Activated T-helper 1 cell treated with anti-CD3 and anti-CD28 coated beads, Interleukin-12 subunit alpha, Interleukin-12 subunit beta, Interleukin-2, Interleukin-4 antibody, amounts not matched to agents 30 ng/mL and 10 ng/mL and 1 ng/mL, durations not matched to agents 14 hours and 24 hours and 36 hours (primary cell): ENCODE measurements at regions of chr3 and their contacts with region 1.

Region 1: DNA sequence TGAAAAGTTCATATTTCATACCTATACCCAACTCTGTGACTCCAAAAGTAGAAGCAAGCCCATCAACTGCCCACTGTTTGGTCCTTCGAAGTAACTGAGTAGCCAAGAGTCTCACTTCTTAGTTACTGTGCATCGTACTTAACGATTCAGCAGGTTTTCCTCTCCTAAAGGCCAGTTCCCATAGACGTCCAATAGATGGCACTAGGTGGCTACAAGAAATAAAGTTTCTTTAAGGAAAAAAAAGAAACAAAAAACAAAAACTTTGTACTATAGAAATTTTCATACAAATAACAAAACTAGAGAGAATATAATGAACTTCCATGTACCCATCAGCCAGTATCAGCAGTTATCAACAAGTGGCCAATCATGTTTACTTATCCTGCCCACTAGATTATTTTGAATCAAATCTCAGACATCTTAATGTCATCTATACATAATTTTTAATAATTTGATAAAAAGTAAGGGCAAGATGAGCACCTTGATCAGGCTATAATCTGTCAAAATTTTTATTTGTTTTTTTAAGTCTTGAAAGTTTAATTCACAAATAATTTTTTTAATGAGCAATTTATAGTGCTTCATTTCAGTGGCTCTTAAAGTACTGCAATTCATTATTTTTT is 63.8 kb upstream of the ACP3 start:
- DNase-seq: no peak
- H3K4me3 Mint-ChIP-seq: no peak overlapping the region
- H3K27ac Mint-ChIP-seq: no peak overlapping the region
- H3K4me1 Mint-ChIP-seq: no peaks in the 10 kb centered on the region
- H3K27me3 Mint-ChIP-seq: peaks cover 5% of the 10 kb centered on the region

Region 2: GRCh38 chr3:132210476-132211346 is 42.7 kb before region 1 on chr3:
- intact Hi-C with region 1: no loop called
- DNase-seq: no peak
- H3K4me3 Mint-ChIP-seq: no peak overlapping the region
- H3K27ac Mint-ChIP-seq: no peak overlapping the region
- H3K4me1 Mint-ChIP-seq: no peaks in the 10 kb centered on the region
- H3K27me3 Mint-ChIP-seq: no peaks in the 10 kb centered on the region

Region 3: DNA sequence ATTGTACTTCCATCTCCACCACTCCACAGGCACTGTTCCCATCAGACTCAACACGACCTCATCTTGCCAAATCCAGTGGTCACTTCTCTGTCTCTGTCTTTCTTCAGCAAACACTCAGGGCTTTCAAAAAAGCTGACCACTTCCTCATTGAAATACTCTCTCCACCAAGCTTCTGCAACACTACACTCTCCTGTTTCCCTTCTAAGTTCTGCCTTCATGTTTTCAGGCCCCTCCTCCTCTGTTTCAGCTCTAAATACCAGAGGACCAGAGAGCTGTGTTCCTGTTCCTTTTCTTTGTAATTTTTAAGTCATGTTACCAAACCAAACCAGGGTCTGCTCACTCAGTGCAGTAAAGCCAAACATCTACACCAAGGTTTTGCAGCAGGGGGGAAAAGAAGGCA is 30.1 kb after region 1 on chr3:
- intact Hi-C with region 1: no loop called
- DNase-seq: no peak
- H3K4me3 Mint-ChIP-seq: no peak overlapping the region
- H3K27ac Mint-ChIP-seq: no peak overlapping the region
- H3K4me1 Mint-ChIP-seq: no peaks in the 10 kb centered on the region
- H3K27me3 Mint-ChIP-seq: peaks cover 5% of the 10 kb centered on the region

Region 4: DNA sequence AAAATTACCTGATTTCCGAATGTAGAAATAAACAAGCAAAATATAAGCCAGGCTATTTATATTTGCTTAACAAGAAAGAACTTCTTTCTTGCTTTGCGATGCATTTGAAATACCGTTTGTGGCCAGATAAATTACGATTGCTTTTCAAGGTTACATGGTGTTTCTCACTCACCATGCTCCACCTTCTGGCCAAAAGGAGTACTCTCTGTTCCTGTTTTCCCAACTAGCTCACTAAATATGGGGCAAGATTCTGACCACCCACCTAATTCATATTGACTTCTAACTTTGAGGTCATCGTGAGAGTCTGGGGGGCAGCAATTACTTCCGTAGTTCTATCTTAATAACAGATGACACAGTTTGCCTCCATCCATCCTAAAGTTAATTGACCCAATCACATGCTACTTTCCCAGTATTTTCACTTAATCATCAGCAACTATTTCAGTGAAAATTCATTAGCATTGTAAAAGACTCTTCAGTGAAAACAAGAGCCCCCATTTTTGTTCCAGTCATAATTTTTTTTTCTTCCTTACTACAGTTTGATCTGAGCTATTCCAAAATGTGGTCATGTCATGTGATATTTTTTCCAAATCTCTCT is 89.7 kb after region 1 on chr3:
- intact Hi-C with region 1: loop called (anchors 1 kb)
- DNase-seq: no peak
- H3K4me3 Mint-ChIP-seq: no peak overlapping the region
- H3K27ac Mint-ChIP-seq: no peak overlapping the region
- H3K4me1 Mint-ChIP-seq: no peaks in the 10 kb centered on the region
- H3K27me3 Mint-ChIP-seq: peaks cover 23% of the 10 kb centered on the region

Region 5: DNA sequence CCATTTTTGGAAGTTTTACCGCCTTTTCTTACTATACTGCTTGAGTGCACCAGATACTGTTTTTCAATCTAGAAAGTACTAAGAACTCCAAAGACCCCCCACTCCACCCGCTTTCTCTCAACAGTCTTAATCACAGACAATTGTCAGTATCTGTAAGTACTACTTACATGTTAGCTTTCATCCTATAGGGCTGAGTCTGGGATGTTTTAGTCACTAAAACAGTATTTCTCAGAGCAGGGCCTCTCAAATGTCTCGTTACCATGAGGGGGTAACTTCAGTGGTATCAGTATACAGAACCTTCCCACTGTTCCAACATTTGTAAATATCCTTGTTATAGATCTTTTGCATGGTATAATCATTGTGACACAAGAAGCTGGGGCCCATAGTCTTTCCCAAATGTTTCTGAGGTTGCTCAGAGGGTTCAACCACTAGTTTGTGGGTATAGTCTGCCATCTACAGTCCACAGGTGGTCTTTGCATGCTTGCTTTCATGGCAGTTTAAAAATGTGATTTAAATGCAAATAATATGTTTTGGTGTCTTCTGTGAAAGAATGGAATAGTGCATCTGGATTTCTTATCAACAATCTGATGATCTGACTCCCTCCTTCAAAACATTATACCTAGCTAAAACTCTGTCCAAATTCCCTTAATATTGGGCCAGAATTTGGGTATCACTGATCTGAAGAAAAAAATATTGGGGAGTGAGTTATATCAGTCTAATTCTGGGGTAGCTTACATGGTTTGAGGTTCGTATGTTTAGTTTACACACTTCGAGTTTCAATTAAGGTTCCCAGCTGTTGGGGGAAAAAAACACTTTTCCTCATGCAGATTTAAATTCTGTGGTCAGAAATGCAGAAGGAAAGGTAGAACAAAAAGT is 145.9 kb after region 1 on chr3:
- intact Hi-C with region 1: loop called (anchors 1 kb)
- DNase-seq: no peak
- H3K4me3 Mint-ChIP-seq: no peak overlapping the region
- H3K27ac Mint-ChIP-seq: no peak overlapping the region
- H3K4me1 Mint-ChIP-seq: no peaks in the 10 kb centered on the region
- H3K27me3 Mint-ChIP-seq: peaks cover 18% of the 10 kb centered on the region

Region 6: DNA sequence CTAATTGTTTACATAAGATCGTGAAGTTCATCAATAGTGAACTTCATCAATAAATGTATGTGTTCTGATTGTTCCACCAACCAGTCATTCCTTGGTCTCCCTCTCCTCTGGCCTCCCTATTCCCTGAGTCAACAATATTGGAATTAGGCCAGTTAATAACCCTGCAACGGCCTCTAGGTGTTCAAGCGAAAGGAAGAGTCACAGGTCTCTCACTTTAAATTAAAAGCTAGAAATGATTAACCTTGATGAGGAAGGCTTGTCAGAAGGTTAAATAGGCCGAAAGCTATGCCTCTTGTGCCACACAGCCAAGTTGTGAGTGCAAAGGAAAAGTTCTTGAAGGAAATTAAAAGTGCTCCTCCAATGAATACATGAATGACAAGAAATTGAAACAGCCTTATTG is 254.3 kb after region 1 on chr3:
- intact Hi-C with region 1: no loop called
- DNase-seq: no peak
- H3K4me3 Mint-ChIP-seq: no peak overlapping the region
- H3K27ac Mint-ChIP-seq: no peak overlapping the region
- H3K4me1 Mint-ChIP-seq: no peaks in the 10 kb centered on the region
- H3K27me3 Mint-ChIP-seq: no peaks in the 10 kb centered on the region